Activated T-helper 1 cell treated with anti-CD3 and anti-CD28 coated beads, Interleukin-12 subunit alpha, Interleukin-12 subunit beta, Interleukin-2, Interleukin-4 antibody, amounts not matched to agents 30 ng/mL and 10 ng/mL and 1 ng/mL, durations not matched to agents 14 hours and 24 hours and 36 hours (primary cell): ENCODE measurements at regions of chr3 and their contacts with region 1.

Region 1: GRCh38 chr3:63961891-63962290 is 49.7 kb upstream of the SCAANT1 start:
- DNase-seq: no peak
- H3K4me3 Mint-ChIP-seq: no peak overlapping the region
- H3K27ac Mint-ChIP-seq: no peak overlapping the region
- H3K4me1 Mint-ChIP-seq: peaks cover 51% of the 10 kb centered on the region
- H3K27me3 Mint-ChIP-seq: no peaks in the 10 kb centered on the region

Region 2: DNA sequence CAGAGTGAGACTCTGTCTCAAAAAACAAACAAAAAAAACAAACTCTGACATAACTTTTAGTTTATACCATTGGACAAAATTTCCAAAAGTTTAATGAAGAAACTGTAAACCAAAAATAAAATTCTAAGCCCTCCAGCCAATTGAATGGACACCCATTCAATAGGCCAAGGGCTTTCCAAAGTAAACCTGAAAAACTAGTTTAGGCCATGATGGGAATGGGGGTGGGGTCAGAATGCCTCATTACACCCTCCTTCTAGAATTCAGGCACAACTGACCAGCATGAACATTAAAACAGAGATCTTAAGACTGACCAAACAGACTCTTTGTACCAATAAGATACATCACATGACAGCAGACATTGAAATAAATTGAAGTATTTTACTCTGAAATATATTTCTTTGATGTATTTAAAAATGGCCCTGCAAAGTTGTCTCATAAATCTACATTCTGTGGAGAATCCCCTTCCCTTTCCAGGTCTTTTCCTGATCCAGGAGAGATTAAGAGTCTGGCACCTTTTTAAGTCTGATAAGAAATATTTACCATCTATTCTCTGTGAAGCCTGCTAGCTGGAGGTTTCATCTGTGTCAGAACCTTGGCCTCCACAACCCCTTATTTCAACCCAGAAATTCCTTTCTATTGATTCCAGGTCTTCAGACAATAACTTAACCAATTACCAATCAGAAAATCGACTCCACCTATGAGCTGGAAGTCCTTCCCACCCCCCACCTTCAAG is 114.0 kb before region 1 on chr3:
- intact Hi-C with region 1: no loop called
- DNase-seq: no peak
- H3K4me3 Mint-ChIP-seq: no peak overlapping the region
- H3K27ac Mint-ChIP-seq: no peak overlapping the region
- H3K4me1 Mint-ChIP-seq: peaks cover 7% of the 10 kb centered on the region
- H3K27me3 Mint-ChIP-seq: no peaks in the 10 kb centered on the region

Region 3: GRCh38 chr3:63951492-63952247 is 10.2 kb before region 1 on chr3:
- intact Hi-C with region 1: loop called (anchors 1 kb)
- DNase-seq: no peak
- H3K4me3 Mint-ChIP-seq: peak overlapping the region; percentile 81
- H3K27ac Mint-ChIP-seq: peak overlapping the region; percentile 70
- H3K4me1 Mint-ChIP-seq: peaks cover 58% of the 10 kb centered on the region
- H3K27me3 Mint-ChIP-seq: no peaks in the 10 kb centered on the region

Region 4: GRCh38 chr3:63979093-63979885 is 17.4 kb after region 1 on chr3:
- intact Hi-C with region 1: loop called (anchors 2 kb)
- DNase-seq: no peak
- H3K4me3 Mint-ChIP-seq: peak overlapping the region; percentile 72
- H3K27ac Mint-ChIP-seq: peak overlapping the region; percentile 84
- H3K4me1 Mint-ChIP-seq: peaks cover 74% of the 10 kb centered on the region
- H3K27me3 Mint-ChIP-seq: no peaks in the 10 kb centered on the region

Region 5: DNA sequence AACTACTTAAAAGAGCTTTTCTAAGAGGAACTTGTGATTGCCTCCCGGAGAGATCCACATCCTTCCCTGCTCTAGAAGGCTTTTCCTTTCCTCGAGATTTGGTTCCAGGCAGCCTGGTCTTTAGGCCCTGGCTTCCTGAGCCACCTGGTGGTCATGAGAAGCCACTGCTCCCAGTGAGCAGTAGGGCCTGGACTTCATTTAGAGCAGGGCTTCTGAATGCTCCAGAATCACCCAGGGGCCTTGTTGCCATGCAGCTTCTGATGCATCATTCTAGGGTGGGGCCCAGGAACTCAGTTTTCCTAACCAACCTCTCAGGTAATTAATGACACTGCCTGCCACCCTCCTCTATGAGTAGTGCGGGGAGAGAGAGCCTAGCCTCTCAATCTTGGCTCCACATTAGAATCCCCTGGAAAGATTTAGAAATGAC is 31.8 kb after region 1 on chr3:
- intact Hi-C with region 1: loop called (anchors 1 kb)
- DNase-seq: peak; percentile 32
- H3K4me3 Mint-ChIP-seq: no peak overlapping the region
- H3K27ac Mint-ChIP-seq: peak overlapping the region; percentile 35
- H3K4me1 Mint-ChIP-seq: peaks cover 30% of the 10 kb centered on the region
- H3K27me3 Mint-ChIP-seq: no peaks in the 10 kb centered on the region

Region 6: GRCh38 chr3:64023187-64023848 is 61.4 kb after region 1 on chr3 and contains the start of gene PSMD6:
- intact Hi-C with region 1: loop called (anchors 1 kb)
- DNase-seq: peak; percentile 93
- H3K4me3 Mint-ChIP-seq: peak within 1 kb of the TSS; percentile 81
- H3K27ac Mint-ChIP-seq: peak within 1 kb of the TSS; percentile 88
- H3K4me1 Mint-ChIP-seq: peaks cover 30% of the 10 kb centered on the region
- H3K27me3 Mint-ChIP-seq: peaks cover 12% of the 10 kb centered on the region
- total RNA-seq, gene PSMD6: 133 and 137 TPM in 2 replicates